Testis (tissue), 5 donors: ENCODE measurements at regions of chr17 and their contacts with region 1.

Region 1: GRCh38 chr17:74859459-74860228 is at the start of gene GRIN2C:
- DNase-seq: no peak
- H3K4me3 ChIP-seq: peak within 1 kb of the TSS; percentile 29 to 41
- H3K27ac ChIP-seq: no peak within 1 kb of the TSS
- H3K4me1 ChIP-seq: peaks cover 12% of the 10 kb centered on the region
- H3K27me3 ChIP-seq: no peaks in the 10 kb centered on the region
- CTCF ChIP-seq: peak in 2 of 3 experiments; percentile 24 to 27
- POLR2A ChIP-seq: no peak
- total RNA-seq, gene GRIN2C: 20.1 to 20.8 TPM

Region 2: DNA sequence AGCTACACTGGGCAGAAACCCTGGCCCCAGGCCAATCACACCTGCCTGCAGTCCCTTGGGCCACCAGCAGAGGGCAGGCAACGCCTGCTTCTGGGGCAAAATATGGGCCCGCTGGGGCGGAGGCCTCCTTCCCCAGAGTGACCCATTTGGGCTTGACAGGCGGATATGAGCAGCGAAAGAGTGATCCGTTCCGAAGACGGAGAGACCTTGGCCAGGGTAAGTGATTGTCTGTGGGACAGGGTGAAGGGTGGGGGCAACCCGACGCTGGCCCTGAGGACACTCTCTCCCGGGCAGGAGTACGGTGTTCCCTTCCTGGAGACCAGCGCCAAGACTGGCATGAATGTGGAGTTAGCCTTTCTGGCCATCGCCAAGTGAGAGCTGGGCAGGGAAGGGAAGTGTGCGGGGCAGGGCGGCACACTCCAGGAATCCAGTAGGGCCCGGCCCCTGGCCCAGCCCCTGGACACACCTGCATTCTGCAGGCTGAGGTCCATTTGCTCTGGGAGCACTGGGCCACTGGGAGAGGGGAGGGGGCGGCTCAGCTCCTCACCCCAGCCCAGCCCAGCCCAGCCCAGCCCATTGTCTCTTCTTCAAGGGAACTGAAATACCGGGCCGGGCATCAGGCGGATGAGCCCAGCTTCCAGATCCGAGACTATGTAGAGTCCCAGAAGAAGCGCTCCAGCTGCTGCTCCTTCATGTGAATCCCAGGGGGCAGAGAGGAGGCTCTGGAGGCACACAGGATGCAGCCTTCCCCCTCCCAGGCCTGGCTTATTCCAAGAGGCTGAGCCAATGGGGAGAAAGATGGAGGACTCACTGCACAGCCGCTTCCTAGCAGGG is 114.7 kb before region 1 on chr17:
- intact Hi-C with region 1: loop called (anchors 5 kb)
- DNase-seq: peak; percentile 90
- H3K4me3 ChIP-seq: no peak overlapping the region
- H3K27ac ChIP-seq: no peak overlapping the region
- H3K4me1 ChIP-seq: peaks cover 23% of the 10 kb centered on the region
- H3K27me3 ChIP-seq: no peaks in the 10 kb centered on the region
- CTCF ChIP-seq: peak; percentile 98 to 100 (median 99)
- POLR2A ChIP-seq: no peak

Region 3: DNA sequence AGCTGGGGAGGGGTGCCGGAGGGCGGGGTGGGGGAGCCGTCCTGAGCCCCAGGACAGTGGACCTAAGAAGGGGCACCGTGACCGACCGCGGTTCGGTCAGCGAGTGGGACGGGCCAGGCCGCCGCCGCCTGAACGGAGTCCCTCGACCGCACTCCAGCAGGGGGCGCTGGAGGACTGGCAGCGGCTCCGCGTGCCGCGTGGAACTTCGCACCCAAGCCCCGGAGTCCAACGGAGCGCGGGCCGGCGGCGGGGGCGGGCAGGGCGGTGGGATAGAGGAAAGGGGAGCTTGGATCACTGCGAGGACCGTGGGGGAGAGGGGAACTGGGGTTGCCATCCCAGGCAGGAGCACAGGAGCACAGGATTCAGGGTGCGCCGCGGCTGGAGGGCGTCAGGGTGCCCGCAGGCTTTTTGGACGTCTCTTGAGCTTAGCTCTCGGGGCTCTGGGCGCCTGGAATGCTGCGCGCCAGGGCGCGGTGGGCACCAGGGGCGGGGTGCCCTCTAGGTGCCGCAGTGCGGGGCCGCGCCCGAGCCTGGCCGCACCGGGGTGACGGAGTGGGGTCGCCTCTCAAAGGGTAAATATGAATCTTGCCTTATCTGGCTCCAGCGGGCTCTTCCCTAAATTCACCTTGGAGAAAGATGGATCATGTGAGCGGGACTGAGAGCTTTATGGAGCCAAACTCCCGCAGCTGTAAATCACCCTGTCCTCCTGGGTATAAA is 64.0 kb after region 1 on chr17:
- intact Hi-C with region 1: no loop called
- DNase-seq: peak; percentile 76
- H3K4me3 ChIP-seq: peak overlapping the region; percentile 22 to 45
- H3K27ac ChIP-seq: no peak overlapping the region
- H3K4me1 ChIP-seq: peaks cover 20% of the 10 kb centered on the region
- H3K27me3 ChIP-seq: no peaks in the 10 kb centered on the region
- CTCF ChIP-seq: peak in 2 of 3 experiments; percentile 49 to 89
- POLR2A ChIP-seq: no peak

Region 4: GRCh38 chr17:74972107-74972972 is 112.7 kb after region 1 on chr17 and contains the start of gene HID1:
- intact Hi-C with region 1: no loop called
- DNase-seq: peak; percentile 88
- H3K4me3 ChIP-seq: peak within 1 kb of the TSS; percentile 53 to 74
- H3K27ac ChIP-seq: no peak within 1 kb of the TSS
- H3K4me1 ChIP-seq: peaks cover 13% of the 10 kb centered on the region
- H3K27me3 ChIP-seq: no peaks in the 10 kb centered on the region
- CTCF ChIP-seq: no peak
- POLR2A ChIP-seq: no peak
- total RNA-seq, gene HID1: 40.9 to 45.8 TPM

Region 5: DNA sequence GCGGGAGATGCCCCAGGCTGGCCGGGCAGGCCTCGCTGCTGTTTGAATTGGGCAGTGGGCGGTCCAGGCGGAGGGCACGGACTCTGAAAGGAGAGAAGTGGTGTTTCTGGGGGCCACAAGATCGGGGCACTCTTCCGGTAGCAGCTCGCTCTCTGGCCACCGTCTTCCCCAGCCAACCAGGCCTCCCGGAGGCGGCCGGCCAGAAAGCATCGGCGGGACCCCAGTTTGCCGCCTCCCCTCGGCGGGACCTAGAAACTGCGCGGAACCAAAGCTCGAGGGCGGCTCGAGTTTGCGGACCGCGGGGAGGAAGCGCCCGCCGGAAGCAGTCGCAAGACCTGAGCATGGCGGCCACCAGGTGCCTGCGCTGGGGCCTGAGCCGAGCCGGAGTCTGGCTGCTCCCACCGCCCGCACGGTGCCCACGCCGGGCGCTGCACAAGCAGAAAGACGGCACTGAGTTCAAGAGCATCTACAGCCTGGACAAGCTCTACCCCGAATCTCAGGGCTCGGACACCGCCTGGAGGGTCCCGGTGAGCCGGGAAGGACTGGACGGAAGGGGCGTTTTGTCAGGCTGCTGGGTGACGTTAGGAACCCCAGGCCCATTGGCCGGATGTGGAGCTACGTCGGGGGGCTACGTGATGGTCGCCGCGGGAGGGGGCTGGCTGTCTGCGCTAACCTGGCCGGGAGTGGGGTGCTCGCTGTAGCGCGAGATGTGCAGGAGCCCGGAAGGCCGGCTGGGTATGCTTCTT is 152.9 kb after region 1 on chr17 and contains the start of gene MRPL58:
- intact Hi-C with region 1: no loop called
- DNase-seq: peak; percentile 85
- H3K4me3 ChIP-seq: peak within 1 kb of the TSS; percentile 72 to 83
- H3K27ac ChIP-seq: peak within 1 kb of the TSS; percentile 68 to 73
- H3K4me1 ChIP-seq: peaks cover 8% of the 10 kb centered on the region
- H3K27me3 ChIP-seq: no peaks in the 10 kb centered on the region
- CTCF ChIP-seq: peak; percentile 23 to 43 (median 42)
- POLR2A ChIP-seq: no peak
- total RNA-seq, gene MRPL58: 24.3 to 38.1 TPM